Common myeloid progenitor, CD34-positive (primary cell): ENCODE measurements at regions of chr18 and their contacts with region 1.

Region 1: DNA sequence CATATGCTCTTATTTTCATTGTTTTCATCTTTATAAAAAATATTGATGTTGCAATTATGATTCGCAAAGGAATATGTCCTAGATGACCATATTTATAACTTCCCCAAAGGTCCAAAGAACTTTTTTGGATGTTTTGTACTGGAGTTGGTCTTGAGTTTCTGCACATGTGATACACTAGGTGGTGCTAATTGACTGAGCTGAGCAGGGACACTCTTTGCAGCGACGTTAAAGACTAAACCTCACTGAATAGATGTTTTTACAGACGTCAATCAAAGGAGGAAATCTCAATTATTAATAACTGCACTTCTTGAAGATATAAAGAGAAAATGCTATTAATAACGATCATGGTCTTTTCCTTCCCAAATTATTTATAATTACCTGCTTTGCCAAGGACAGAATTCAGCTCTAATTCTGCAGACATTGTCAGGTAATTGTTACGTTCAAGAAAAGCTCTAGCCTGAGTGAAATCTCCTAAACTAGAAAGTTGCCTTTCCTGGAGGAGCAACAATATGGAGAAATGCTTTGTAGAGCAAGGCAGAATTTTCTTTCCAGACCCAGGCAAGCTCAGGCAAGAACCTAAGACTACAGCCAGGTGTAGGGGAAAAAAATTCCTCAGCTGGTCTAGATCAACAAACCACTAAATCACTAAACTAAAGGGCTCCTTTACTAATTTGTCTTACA is 119.3 kb upstream of the RBBP8 start:
- DNase-seq: peak; percentile 21 to 58 (median 51)
- H3K4me3 ChIP-seq: no peak overlapping the region
- H3K27ac ChIP-seq: no peak overlapping the region
- H3K4me1 ChIP-seq: no peaks in the 10 kb centered on the region
- H3K27me3 ChIP-seq: peaks cover 0 to 2% (median 0%) of the 10 kb centered on the region in 5 experiments

Region 2: GRCh38 chr18:22983175-22983574 is 169.4 kb after region 1 on chr18:
- CTCF ChIA-PET with region 1: interaction called, 28 read pairs
- POLR2A ChIA-PET with region 1: no interaction called
- DNase-seq: peak; percentile 42 to 68 (median 64)
- H3K4me3 ChIP-seq: no peak overlapping the region
- H3K27ac ChIP-seq: no peak overlapping the region
- H3K4me1 ChIP-seq: peaks cover 0 to 2% (median under 1%) of the 10 kb centered on the region in 4 experiments
- H3K27me3 ChIP-seq: no peaks in the 10 kb centered on the region